Gastrocnemius medialis (tissue), 4 donors: ENCODE measurements at regions of chr2 and their contacts with region 1.

Region 1: DNA sequence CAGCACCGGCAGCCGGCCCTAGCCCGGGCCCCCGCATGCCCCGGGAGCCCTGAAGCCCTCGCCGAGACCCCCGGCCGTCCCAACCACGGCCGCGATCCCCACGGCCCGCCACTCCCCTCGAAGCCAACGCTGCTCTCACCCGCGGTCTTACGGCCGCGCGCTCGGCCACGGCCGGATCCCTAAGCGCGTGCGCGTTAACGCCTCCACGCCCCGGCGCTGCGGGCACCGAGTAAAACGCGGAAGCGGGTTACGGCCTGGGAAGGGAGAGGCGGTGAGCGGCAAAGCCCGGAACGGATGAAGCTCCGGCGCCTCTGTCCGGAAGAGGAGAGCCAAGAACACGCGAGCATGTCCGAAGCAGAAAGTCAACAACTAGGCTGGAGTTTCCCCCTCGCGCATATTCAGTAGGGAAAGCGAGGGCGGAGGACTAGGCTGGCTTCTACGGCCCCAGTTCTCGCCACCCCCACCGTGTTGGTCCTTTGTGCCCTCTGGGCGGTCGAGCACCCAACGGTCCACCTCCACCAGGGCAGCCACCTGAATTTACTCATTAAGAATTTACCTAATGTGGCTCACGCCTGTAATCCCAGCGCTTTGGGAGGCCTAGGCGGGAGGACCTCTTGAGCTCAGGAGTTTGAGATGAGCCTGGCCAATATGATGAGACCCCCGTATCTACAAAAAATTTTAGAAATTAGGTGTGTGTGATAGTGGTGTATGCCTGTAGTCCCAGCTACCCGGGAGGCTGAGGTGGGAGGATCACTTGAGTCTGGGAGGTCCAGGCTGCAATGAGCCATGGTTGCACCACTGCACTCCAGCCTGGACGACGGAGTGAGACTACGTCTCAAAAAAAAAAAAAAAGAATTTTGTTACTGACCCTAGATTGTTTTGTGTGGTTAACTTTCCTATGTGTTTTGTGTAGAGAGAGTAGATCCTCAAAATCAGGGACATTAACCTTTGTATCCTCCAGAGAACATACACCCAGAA is at the start of gene KANSL3:
- DNase-seq: peak; percentile 87 to 89
- ATAC-seq: peak; percentile 80 to 89
- H3K4me3 ChIP-seq: peak within 1 kb of the TSS; percentile 57 to 85 (median 66)
- H3K27ac ChIP-seq: peak within 1 kb of the TSS; percentile 83 to 98 (median 90)
- H3K4me1 ChIP-seq: peaks cover 36 to 37% of the 10 kb centered on the region in 2 donors
- H3K27me3 ChIP-seq: no peaks in the 10 kb centered on the region
- CTCF ChIP-seq: peak in 2 of 5 experiments; percentile 46 to 51
- POLR2A ChIP-seq: peak; percentile 95
- total RNA-seq, gene KANSL3: 49.4 to 76.9 (median 60.4) TPM

Region 2: DNA sequence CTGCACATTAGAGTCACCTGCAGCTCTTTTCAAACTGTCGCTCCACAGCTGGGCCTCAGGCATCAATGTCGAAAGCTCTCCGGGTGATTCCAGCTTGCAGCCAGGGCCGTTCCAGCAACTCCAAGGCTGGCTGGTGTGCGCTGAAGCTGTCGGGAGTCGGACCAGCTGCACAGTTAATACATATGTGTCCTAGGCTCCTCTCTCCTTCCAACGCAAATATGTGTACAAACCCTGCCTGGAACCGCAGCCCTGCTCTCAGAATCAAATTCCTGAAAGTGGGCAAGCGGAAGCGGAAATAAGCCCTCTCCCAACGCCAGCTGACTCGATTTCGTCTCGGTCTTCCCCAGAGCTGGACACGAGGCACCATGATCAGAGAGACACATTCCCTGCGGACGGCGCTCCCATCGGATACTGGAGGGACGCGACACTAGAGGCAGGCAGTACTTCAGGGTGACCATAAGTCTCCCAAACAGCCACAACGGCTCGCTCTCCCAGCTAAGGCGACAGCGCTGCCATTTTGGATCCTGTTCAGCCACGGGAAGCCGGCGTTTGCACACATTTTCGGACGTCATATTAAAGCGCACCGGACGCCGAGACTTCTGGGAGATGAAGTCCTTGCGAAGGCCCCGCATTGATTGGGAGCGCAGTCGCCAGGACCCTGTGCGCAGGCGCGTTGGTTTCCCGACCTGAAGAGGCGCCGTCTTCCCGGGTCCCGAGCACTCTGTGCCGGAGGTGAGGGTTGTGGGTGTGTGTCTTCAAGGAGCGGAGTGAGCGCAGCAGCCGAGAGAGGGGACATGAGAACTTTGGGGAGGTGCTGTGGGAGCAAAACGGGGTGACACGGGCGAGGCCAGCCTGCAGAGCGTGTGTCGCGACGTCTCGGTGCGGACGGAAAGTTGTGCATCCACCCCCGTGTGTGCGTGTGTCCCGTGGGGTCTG is 1473.0 kb before region 1 on chr2 and contains the start of gene ZNF2:
- in situ Hi-C with region 1: no loop called
- intact Hi-C with region 1: loop called (anchors 10 kb)
- DNase-seq: peak; percentile 97
- ATAC-seq: peak; percentile 99 to 100
- H3K4me3 ChIP-seq: peak within 1 kb of the TSS; percentile 65 to 96 (median 90)
- H3K27ac ChIP-seq: peak within 1 kb of the TSS; percentile 90 to 95 (median 94)
- H3K4me1 ChIP-seq: peaks cover 22 to 26% of the 10 kb centered on the region in 2 donors
- H3K27me3 ChIP-seq: no peaks in the 10 kb centered on the region
- CTCF ChIP-seq: peak in 1 of 5 experiments; percentile 17
- POLR2A ChIP-seq: peak; percentile 61 to 63
- total RNA-seq, gene ZNF2: 2.4 to 3.6 (median 2.9) TPM

Region 3: GRCh38 chr2:96251721-96252292 is 386.6 kb before region 1 on chr2:
- in situ Hi-C with region 1: no loop called
- intact Hi-C with region 1: loop called (anchors 10 kb)
- DNase-seq: peak; percentile 90 to 98
- ATAC-seq: peak; percentile 90 to 92
- H3K4me3 ChIP-seq: peak overlapping the region in 1 of 4 donors; percentile 45
- H3K27ac ChIP-seq: peak overlapping the region; percentile 94 to 99 (median 96)
- H3K4me1 ChIP-seq: peaks cover 78 to 86% of the 10 kb centered on the region in 2 donors
- H3K27me3 ChIP-seq: no peaks in the 10 kb centered on the region
- CTCF ChIP-seq: no peak
- POLR2A ChIP-seq: no peak

Region 4: DNA sequence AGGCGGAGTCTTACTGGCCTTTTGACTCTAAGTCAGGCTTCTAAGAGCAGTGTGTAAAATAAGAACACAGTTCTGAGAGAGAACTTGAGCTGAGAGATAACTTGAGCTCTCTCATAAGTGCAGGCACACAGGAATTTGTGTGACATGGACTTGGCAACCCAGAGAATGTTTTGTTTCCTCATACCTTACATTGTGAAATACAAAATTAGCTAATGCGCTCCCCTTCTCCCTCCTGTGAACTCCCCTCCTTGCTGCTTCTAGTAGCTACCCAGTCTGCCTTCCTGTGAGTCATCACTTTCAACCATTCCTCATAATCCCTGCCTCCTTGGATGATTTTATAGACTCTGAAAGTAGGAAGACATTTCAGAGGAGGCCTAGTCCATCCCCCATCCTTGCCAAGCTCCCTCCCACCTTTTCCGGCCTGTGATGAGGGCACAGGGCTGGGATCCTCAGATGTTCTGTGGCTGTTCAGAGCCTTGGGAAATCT is 26.7 kb after region 1 on chr2:
- in situ Hi-C with region 1: no loop called
- intact Hi-C with region 1: loop called (anchors 1 kb)
- DNase-seq: peak; percentile 54 to 77
- ATAC-seq: peak; percentile 99
- H3K4me3 ChIP-seq: no peak overlapping the region
- H3K27ac ChIP-seq: peak overlapping the region; percentile 83 to 88 (median 85)
- H3K4me1 ChIP-seq: peaks cover 10 to 15% of the 10 kb centered on the region in 2 donors
- H3K27me3 ChIP-seq: no peaks in the 10 kb centered on the region
- CTCF ChIP-seq: no peak
- POLR2A ChIP-seq: no peak

Region 5: DNA sequence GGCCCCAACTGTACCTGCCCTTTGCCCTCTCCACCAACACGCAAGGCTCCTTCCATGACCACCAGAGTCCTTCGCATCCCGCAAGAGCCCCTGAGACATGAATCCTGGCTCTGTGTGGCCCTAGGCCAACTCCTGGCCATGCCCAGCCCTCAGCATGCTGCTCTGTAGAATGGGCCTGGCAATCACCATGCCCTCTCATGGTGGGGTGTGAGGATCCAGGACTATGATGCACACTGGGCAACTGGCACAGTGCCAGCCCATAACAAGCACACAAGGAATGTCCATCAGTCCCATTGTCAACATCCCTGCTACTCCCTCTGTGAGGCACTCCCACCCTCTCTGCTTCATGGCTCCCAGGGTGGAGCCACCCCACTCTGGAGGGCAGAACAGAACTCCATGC is 48.8 kb after region 1 on chr2:
- in situ Hi-C with region 1: no loop called
- intact Hi-C with region 1: no loop called
- DNase-seq: no peak
- ATAC-seq: no peak
- H3K4me3 ChIP-seq: no peak overlapping the region
- H3K27ac ChIP-seq: no peak overlapping the region
- H3K4me1 ChIP-seq: peaks cover 0 to 7% of the 10 kb centered on the region in 2 donors
- H3K27me3 ChIP-seq: peaks cover 0 to 12% (median 7%) of the 10 kb centered on the region in 3 donors
- CTCF ChIP-seq: no peak
- POLR2A ChIP-seq: no peak

Region 6: DNA sequence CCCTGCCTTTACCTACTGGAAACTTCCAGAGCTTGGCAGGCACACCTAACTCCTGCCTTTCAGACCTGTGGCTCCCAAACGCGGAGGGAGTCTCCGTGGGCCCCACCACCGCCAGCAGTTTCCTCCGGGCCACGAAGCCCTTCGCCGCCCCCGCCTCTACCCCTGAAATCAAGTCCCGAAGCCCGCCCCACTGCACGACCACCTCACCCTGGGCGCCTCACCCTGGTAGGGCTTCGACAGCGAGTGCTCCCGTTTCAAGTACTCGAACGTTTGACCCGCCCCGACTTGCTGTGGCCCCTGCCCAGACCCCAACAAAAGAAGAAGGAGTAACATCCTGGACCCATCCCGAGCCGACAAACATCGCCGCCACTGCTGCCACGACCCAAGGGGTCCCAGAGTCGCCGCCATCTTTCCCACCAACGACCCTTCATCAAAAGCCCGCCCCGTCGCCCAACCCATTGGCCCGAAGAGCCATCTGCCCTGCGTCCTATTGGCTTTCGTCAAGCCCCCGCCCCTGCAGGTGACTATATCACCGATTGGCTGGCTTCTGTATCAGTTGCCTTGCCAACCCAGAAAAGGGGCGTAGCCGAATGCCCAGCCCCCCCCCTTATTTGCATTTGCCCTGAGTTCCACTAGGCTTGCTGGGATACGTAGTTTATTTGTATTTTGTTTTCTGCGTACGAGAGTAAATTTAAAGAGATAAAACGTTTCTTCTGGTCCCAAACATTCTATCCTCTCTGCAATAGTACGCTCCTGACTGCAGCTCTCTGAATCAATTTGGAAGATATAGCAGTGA is 101.4 kb after region 1 on chr2 and contains the start of gene LMAN2L:
- in situ Hi-C with region 1: loop called in 1 of 4 experiments (anchors 5 kb)
- intact Hi-C with region 1: loop called (anchors 1 kb)
- DNase-seq: peak; percentile 98 to 99
- ATAC-seq: peak; percentile 98 to 99
- H3K4me3 ChIP-seq: peak within 1 kb of the TSS; percentile 77 to 90 (median 84)
- H3K27ac ChIP-seq: peak within 1 kb of the TSS; percentile 85 to 88 (median 88)
- H3K4me1 ChIP-seq: peaks cover 15 to 16% of the 10 kb centered on the region in 2 donors
- H3K27me3 ChIP-seq: no peaks in the 10 kb centered on the region
- CTCF ChIP-seq: peak in 2 of 5 experiments; percentile 11 to 21
- POLR2A ChIP-seq: peak; percentile 57 to 64
- total RNA-seq, gene LMAN2L: 8.8 to 17.3 (median 16.4) TPM

Region 7: GRCh38 chr2:96760036-96760985 is 121.9 kb after region 1 on chr2 and contains the start of gene CNNM4:
- in situ Hi-C with region 1: loop called in 1 of 4 experiments (anchors 10 kb)
- intact Hi-C with region 1: loop called (anchors 1 kb)
- DNase-seq: peak; percentile 89 to 93
- ATAC-seq: peak; percentile 80 to 87
- H3K4me3 ChIP-seq: peak within 1 kb of the TSS; percentile 64 to 87 (median 74)
- H3K27ac ChIP-seq: peak within 1 kb of the TSS; percentile 83 to 91 (median 88)
- H3K4me1 ChIP-seq: peaks cover 39 to 41% of the 10 kb centered on the region in 2 donors
- H3K27me3 ChIP-seq: no peaks in the 10 kb centered on the region
- CTCF ChIP-seq: peak in 1 of 5 experiments; percentile 36
- POLR2A ChIP-seq: peak; percentile 84 to 90
- total RNA-seq, gene CNNM4: 5.4 to 20.1 (median 9.1) TPM